T-cell (primary cell): ENCODE measurements at regions of chr16 and their contacts with region 1.

Region 1: GRCh38 chr16:11498683-11499082 is 88.0 kb downstream of the LITAF start:
- DNase-seq: no peak
- ATAC-seq: no peak
- H3K4me3 ChIP-seq: no peak overlapping the region
- H3K4me3 Mint-ChIP-seq: no peak overlapping the region
- H3K27ac ChIP-seq: no peak overlapping the region
- H3K27ac Mint-ChIP-seq: no peak overlapping the region
- H3K4me1 ChIP-seq: peaks cover 16 to 22% of the 10 kb centered on the region in 2 experiments
- H3K4me1 Mint-ChIP-seq: peaks cover 27 to 36% (median 33%) of the 10 kb centered on the region in 3 donors
- H3K27me3 ChIP-seq: peaks cover 0 to 2% of the 10 kb centered on the region in 2 experiments
- H3K27me3 Mint-ChIP-seq: no peaks in the 10 kb centered on the region

Region 2: DNA sequence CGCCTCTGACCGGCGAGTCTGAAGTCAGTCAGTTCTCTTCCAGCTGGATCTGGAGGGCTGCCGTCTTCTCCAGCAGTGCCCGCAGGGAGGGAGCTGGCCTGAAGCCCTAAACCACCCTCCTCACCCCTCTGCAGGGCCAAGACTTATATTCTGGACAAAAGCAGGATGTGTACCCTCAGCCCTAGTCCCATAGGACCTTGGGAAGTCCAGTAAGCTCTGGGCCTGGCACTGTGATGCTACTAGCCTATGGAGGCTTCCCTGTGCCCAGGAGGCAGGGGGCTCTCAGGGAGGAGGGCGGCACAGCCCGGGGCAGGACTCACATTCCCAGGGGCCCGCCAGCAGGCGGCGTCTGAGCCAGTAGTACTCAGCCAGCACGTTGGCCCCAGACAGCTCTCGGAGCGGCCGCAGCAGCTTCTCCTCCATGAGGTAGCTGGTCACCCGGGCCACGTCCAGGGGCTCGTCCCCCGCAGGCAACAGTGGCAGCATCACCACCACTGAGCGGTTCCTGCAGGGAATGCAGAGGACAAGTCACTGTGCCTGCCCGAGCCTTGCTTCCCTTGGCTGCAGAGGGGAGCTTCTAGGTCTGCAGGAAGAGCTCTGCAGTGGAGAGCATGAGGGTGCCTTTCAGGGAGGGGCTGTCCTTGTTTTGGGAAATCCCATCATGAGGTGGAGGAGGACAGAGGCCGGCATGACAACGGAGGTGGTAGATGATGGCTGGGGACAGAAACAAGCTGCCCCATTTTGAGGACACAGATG is 111.7 kb before region 1 on chr16:
- CTCF ChIA-PET with region 1: interaction called in 1 of 2 experiments, 10 read pairs
- POLR2A ChIA-PET with region 1: no interaction called
- DNase-seq: no peak
- ATAC-seq: no peak
- H3K4me3 ChIP-seq: no peak overlapping the region
- H3K4me3 Mint-ChIP-seq: no peak overlapping the region
- H3K27ac ChIP-seq: no peak overlapping the region
- H3K27ac Mint-ChIP-seq: no peak overlapping the region
- H3K4me1 ChIP-seq: no peaks in the 10 kb centered on the region
- H3K4me1 Mint-ChIP-seq: no peaks in the 10 kb centered on the region
- H3K27me3 ChIP-seq: peaks cover 0 to 10% of the 10 kb centered on the region in 2 experiments
- H3K27me3 Mint-ChIP-seq: no peaks in the 10 kb centered on the region